ENCODE measurements at regions of chr5 and their contacts with region 1.

Region 1: DNA sequence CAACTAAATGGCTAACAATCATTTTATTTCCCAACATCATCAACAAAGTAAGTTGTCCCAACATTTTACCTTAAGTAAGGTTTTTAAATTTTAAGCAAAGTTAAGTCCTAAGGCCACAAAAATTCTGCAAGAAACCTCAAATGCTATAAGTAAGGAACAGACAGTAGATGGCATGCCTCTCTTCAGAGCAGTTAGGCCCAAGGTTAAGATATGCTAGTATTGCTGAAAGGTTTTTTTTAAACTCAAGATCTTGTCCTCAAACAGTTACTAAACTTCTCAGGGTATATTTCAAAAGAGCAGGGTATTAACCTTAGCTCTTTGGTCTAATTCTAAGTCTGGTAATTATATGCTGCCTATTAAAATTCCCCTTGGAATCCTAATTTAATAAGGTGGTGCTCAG is 35.1 kb downstream of the PJA2 start:
- DNase-seq: peak in 2 of 14 experiments; percentile 20 to 25
- ATAC-seq: peak; percentile 34
- H3K4me3 ChIP-seq: no peak overlapping the region
- H3K4me3 Mint-ChIP-seq: no peak overlapping the region
- H3K27ac ChIP-seq: no peak overlapping the region
- H3K27ac Mint-ChIP-seq: no peak overlapping the region
- H3K4me1 ChIP-seq: no peaks in the 10 kb centered on the region
- H3K4me1 Mint-ChIP-seq: peaks cover 58% of the 10 kb centered on the region
- H3K27me3 ChIP-seq: no peaks in the 10 kb centered on the region
- H3K27me3 Mint-ChIP-seq: no peaks in the 10 kb centered on the region
- CTCF ChIP-seq: no peak

Region 2: DNA sequence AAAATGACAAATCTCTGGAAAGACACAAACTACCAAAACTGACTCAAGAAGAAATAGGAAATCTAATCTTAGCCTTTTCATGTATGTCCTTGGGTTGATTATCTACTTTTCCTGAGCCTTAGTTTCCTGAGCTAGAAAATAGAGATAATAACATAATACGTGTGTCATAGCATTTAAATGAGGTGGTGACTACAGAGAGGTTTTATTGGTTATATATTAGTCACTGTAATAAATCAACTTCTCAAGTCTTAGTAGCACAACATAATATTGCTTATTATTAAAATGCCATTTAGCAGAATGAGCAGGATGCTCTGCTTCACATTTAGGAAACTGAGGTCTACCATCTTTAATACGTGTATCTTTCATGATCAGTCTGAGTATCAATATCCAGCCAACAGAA is 42.3 kb after region 1 on chr5:
- CTCF ChIA-PET with region 1: no interaction called
- POLR2A ChIA-PET with region 1: no interaction called
- intact Hi-C with region 1: loop called in 1 of 2 experiments (anchors 5 kb)
- DNase-seq: no peak
- ATAC-seq: no peak
- H3K4me3 ChIP-seq: no peak overlapping the region
- H3K4me3 Mint-ChIP-seq: no peak overlapping the region
- H3K27ac ChIP-seq: no peak overlapping the region
- H3K27ac Mint-ChIP-seq: no peak overlapping the region
- H3K4me1 ChIP-seq: no peaks in the 10 kb centered on the region
- H3K4me1 Mint-ChIP-seq: peaks cover 2% of the 10 kb centered on the region
- H3K27me3 ChIP-seq: no peaks in the 10 kb centered on the region
- H3K27me3 Mint-ChIP-seq: peaks cover 3% of the 10 kb centered on the region
- CTCF ChIP-seq: no peak